K562 (cell line): ENCODE measurements at regions of chr16 and their contacts with region 1.

Region 1: GRCh38 chr16:391885-392335 is 5.1 kb upstream of the NME4 start:
- DNase-seq: peak; percentile 56 to 76 (median 68)
- ATAC-seq: peak; percentile 72
- H3K4me3 ChIP-seq: no peak overlapping the region
- H3K27ac ChIP-seq: no peak overlapping the region
- H3K4me1 ChIP-seq: peaks cover 7 to 42% of the 10 kb centered on the region in 2 experiments
- H3K27me3 ChIP-seq: no peaks in the 10 kb centered on the region
- CTCF ChIP-seq: peak; percentile 90 to 97 (median 90)
- EP300 ChIP-seq: no peak
- POLR2A ChIP-seq: no peak
- RAD21 ChIP-seq: peak; percentile 22 to 79; a peak in 3 of 4 replicates

Region 2: GRCh38 chr16:164827-165538 is 226.9 kb before region 1 on chr16:
- CTCF ChIA-PET with region 1: no interaction called
- POLR2A ChIA-PET with region 1: no interaction called
- in situ Hi-C with region 1: no loop called
- intact Hi-C with region 1: no loop called
- DNase-seq: peak; percentile 38 to 91 (median 84)
- ATAC-seq: peak; percentile 81
- H3K4me3 ChIP-seq: peak overlapping the region; percentile 35
- H3K27ac ChIP-seq: peak overlapping the region; percentile 66; the same call in 2 of the 3 replicates
- H3K4me1 ChIP-seq: peaks cover 10 to 72% of the 10 kb centered on the region in 2 experiments; a peak in 4 of 5 replicates
- H3K27me3 ChIP-seq: no peaks in the 10 kb centered on the region
- CTCF ChIP-seq: no peak
- EP300 ChIP-seq: no peak
- POLR2A ChIP-seq: 0 out of 2 replicates have a peak, but pooled peaks have one; percentile 36
- RAD21 ChIP-seq: no peak

Region 3: GRCh38 chr16:483341-484075 is 91.6 kb after region 1 on chr16:
- CTCF ChIA-PET with region 1: no interaction called
- POLR2A ChIA-PET with region 1: no interaction called
- in situ Hi-C with region 1: no loop called
- intact Hi-C with region 1: loop called (anchors 10 kb)
- DNase-seq: peak in 1 of 4 experiments; percentile 37
- ATAC-seq: peak; percentile 55
- H3K4me3 ChIP-seq: no peak overlapping the region
- H3K27ac ChIP-seq: no peak overlapping the region
- H3K4me1 ChIP-seq: peaks cover 11 to 38% of the 10 kb centered on the region in 2 experiments; a peak in 4 of 5 replicates
- H3K27me3 ChIP-seq: no peaks in the 10 kb centered on the region
- CTCF ChIP-seq: no peak
- EP300 ChIP-seq: no peak
- POLR2A ChIP-seq: no peak
- RAD21 ChIP-seq: no peak

Region 4: GRCh38 chr16:615122-615521 is 223.2 kb after region 1 on chr16:
- CTCF ChIA-PET with region 1: no interaction called
- POLR2A ChIA-PET with region 1: no interaction called
- in situ Hi-C with region 1: no loop called
- intact Hi-C with region 1: no loop called
- DNase-seq: no peak
- ATAC-seq: no peak
- H3K4me3 ChIP-seq: no peak overlapping the region
- H3K27ac ChIP-seq: no peak overlapping the region; the same call in 2 of the 3 replicates
- H3K4me1 ChIP-seq: peaks cover 0 to 29% of the 10 kb centered on the region in 2 experiments; a peak in 2 of 5 replicates
- H3K27me3 ChIP-seq: no peaks in the 10 kb centered on the region
- CTCF ChIP-seq: no peak
- EP300 ChIP-seq: no peak
- POLR2A ChIP-seq: no peak
- RAD21 ChIP-seq: no peak

Region 5: GRCh38 chr16:667780-668518 is 276.0 kb after region 1 on chr16 and contains the start of gene RHOT2:
- CTCF ChIA-PET with region 1: no interaction called
- POLR2A ChIA-PET with region 1: no interaction called
- in situ Hi-C with region 1: loop called (anchors 10 kb)
- intact Hi-C with region 1: loop called (anchors 10 kb)
- DNase-seq: peak; percentile 87 to 96 (median 88)
- ATAC-seq: peak; percentile 98
- H3K4me3 ChIP-seq: peak within 1 kb of the TSS; percentile 99
- H3K27ac ChIP-seq: peak within 1 kb of the TSS; percentile 86
- H3K4me1 ChIP-seq: peaks cover 11 to 91% of the 10 kb centered on the region in 2 experiments; a peak in 4 of 5 replicates
- H3K27me3 ChIP-seq: no peaks in the 10 kb centered on the region
- CTCF ChIP-seq: peak; percentile 77 to 97 (median 91)
- EP300 ChIP-seq: peak; percentile 65
- POLR2A ChIP-seq: peak; percentile 80
- RAD21 ChIP-seq: peak; percentile 50 to 69
- polyA plus RNA-seq, gene RHOT2: 5.0 to 6.8 TPM

Region 6: DNA sequence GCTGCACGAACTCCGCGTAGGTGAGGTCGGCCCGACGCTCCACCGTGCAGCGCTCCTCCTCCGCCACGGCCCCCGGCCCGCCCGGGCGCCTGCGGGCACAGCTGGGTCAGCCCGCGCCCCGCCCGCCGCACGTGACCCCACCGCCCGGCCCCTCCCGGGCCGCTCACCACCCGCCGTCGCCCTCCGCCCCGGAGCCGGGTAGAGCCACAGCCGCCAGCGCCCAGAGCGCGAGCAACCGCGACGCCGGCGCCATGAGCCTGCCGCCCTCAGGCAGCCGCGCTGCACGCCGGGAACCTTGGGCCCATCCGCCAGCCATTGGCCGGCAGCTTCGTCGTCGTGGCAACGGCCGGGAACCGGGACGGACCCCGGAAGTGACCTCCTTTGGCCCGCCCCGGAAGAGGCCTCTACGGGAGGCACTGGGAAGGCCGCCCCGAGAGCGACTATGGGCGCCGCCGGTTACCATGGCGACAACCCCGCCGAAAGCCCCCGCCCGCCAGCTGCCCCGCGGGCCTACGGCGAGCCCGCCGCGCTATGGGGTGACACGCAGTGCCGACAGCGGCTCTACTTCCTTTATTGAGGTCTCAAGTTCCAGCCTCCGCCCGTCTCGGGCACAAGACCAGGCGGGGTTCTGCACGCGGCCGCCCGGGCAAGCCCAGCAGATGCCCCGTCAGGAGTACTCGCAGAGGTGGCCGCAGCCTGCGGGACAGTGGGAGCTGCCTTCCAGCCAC is 292.3 kb after region 1 on chr16 and contains the start of gene JMJD8:
- CTCF ChIA-PET with region 1: no interaction called
- POLR2A ChIA-PET with region 1: no interaction called
- in situ Hi-C with region 1: loop called (anchors 10 kb)
- intact Hi-C with region 1: loop called (anchors 5 kb)
- DNase-seq: peak; percentile 83 to 97 (median 90)
- ATAC-seq: peak; percentile 76
- H3K4me3 ChIP-seq: peak within 1 kb of the TSS; percentile 98
- H3K27ac ChIP-seq: peak within 1 kb of the TSS; percentile 88
- H3K4me1 ChIP-seq: peaks cover 27 to 96% of the 10 kb centered on the region in 2 experiments
- H3K27me3 ChIP-seq: no peaks in the 10 kb centered on the region
- CTCF ChIP-seq: 0 out of 6 replicates have a peak, but pooled peaks of 1 of the 3 experiments have one; percentile 1
- EP300 ChIP-seq: no peak; the same call in 1 of the 2 replicates
- POLR2A ChIP-seq: peak; percentile 59; the same call in 1 of the 2 replicates
- RAD21 ChIP-seq: no peak
- polyA plus RNA-seq, gene JMJD8: 1.2 to 2.3 TPM

Region 7: DNA sequence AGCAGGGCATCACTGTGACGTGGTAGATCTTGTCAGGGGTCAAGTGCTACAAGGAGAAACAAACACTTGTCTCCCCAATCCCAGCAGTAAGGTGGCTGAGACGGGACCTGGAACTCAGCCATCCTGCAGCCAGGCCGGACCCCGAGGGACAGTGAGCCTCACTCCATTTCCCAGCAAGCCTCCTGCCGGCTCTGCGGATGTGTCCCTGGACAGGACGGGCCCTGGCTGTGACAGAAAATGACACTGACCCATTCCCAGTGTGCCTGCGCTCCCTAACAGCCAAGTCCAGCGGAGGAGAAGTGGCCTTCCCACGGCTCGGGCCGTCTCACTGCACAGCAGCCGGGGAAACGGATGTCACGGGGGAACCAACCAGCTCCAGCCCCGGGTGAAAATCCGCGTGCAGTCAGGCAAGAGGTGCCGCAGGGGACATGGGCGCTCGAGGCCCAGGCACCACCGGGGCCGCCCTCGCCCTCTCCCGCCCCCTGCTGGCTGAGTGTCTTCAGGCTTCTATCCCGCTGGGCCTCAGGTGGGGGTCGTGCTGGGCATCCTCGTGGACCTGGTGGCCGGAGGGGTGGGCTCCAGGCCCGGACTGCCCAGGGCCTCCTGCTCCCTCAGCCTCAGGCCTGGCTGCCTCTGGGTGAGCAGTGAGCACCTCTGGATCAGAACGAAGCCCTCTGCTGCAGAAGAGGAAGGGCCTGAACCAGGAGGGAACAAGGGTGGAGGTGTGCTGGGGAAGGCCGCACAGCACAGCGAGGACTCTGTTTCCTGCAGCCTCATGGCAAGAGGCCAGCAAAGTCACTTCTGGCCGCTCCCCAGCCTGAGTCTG is 341.7 kb after region 1 on chr16:
- CTCF ChIA-PET with region 1: no interaction called
- POLR2A ChIA-PET with region 1: no interaction called
- in situ Hi-C with region 1: no loop called
- intact Hi-C with region 1: no loop called
- DNase-seq: peak; percentile 48 to 61 (median 56)
- ATAC-seq: peak; percentile 71
- H3K4me3 ChIP-seq: no peak overlapping the region
- H3K27ac ChIP-seq: no peak overlapping the region
- H3K4me1 ChIP-seq: peaks cover 13 to 96% of the 10 kb centered on the region in 2 experiments
- H3K27me3 ChIP-seq: no peaks in the 10 kb centered on the region
- CTCF ChIP-seq: peak; percentile 59 to 79 (median 74)
- EP300 ChIP-seq: no peak
- POLR2A ChIP-seq: no peak
- RAD21 ChIP-seq: peak in 1 of 2 experiments; percentile 43; a peak in 2 of 4 replicates